PC-9 (cell line): ENCODE measurements at regions of chr19 and their contacts with region 1.

Region 1: DNA sequence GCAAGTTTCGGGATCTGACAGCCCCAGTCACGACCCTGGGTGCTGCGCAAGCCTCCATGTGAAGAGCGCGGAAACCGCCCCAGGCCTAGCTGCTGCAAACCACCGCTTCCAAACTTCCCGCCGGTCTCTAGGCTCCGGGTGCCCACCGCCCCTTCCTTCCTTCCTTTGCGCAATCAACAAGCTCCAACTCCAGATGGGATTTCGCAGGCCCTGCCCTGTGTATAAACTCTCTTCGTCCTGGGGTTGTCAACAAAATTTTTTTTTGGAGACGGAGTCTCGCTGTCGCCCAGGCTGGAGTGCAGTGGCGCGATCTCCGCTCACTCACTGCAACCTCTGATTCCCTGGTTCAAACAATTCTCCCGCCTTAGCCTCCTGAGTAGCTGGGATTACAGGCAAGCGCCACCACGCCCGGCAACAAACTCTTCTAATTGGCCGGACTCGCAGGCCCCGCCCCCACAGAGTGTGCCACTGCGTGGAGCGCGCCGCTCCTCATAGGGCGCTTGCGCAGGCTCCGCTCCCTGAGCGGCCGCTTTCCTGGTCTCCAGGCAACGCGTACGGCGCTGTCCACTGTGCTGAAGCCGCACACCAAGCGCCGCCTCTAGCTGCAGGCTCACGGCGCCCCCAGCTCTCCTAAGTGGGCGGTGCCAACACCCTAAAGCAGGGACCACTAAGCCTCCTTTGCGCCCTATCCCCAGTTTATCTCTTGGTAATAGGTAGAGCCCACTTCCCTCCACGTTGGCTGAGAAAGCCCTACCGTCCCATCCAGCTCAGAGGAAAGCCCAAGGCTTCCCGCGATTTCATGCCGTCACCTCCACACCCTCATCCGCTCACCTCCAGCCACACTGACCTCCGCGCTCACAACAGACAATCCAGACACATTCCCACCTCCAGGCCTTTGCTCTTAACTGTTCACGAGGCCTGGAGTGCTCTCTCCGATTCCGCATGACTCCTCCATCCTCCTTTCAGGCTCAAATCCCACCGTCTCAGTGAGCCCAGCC is 5.5 kb upstream of the QTRT1 start:
- DNase-seq: peak; percentile 81 to 91
- H3K4me3 ChIP-seq: no peak overlapping the region
- H3K27ac ChIP-seq: no peak overlapping the region
- H3K4me1 ChIP-seq: peaks cover 8% of the 10 kb centered on the region; the same call in 1 of the 2 replicates
- H3K27me3 ChIP-seq: 0 out of 2 replicates have a peak, but pooled peaks cover 14% of the 10 kb centered on the region
- CTCF ChIP-seq: no peak

Region 2: DNA sequence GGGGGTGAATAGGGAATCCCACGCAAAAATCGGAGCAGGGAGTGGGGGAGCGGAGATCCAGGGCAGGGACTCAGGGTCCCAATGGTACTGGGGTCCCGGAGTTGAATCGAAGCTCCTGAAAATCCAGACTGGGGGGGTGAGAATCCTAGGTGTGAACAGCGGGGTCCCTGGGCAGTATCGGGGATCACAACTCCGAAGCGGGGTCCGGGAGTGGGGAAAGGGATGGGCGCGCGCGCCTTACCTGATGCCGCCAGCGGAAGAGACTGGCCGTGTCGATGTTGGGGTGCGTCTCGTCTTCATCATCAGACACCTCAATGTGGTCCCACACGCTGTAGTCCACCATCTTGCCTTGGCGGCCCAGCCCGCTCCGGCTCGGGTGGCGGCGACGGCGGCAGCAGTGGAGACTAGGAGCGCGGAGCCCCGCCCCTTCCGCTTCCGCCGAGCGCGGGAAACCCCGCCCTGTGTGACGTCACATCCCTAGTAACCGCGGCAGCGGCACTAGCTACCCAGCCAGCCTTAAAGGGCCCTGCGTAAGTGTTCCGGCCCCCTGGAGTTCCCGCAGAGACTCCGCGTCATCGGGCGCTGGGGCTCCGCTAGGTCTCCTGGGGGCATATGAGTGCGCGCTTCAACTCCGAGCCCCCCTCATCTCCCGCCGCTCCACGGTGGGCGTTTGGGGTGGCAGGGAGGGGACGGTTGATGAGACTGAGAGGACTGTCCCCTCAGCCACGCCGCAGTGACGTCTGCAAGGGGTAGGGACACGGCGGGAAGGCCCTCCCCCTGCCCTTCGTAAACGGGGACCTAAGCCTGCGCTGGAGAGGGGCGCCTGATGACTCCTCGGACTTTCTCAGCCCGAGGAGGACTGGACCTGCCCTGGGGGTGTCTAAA is 292.3 kb before region 1 on chr19 and contains the start of gene CDC37:
- CTCF ChIA-PET with region 1: interaction called, 3 read pairs
- POLR2A ChIA-PET with region 1: interaction called, 3 read pairs
- intact Hi-C with region 1: loop called (anchors 2 kb)
- DNase-seq: peak; percentile 90 to 96
- H3K4me3 ChIP-seq: peak within 1 kb of the TSS; percentile 89
- H3K27ac ChIP-seq: peak within 1 kb of the TSS; percentile 39
- H3K4me1 ChIP-seq: peaks cover 20% of the 10 kb centered on the region
- H3K27me3 ChIP-seq: peaks cover 21% of the 10 kb centered on the region; the same call in 1 of the 2 replicates
- CTCF ChIP-seq: no peak
- total RNA-seq, gene CDC37: 156 and 191 TPM in 2 replicates

Region 3: DNA sequence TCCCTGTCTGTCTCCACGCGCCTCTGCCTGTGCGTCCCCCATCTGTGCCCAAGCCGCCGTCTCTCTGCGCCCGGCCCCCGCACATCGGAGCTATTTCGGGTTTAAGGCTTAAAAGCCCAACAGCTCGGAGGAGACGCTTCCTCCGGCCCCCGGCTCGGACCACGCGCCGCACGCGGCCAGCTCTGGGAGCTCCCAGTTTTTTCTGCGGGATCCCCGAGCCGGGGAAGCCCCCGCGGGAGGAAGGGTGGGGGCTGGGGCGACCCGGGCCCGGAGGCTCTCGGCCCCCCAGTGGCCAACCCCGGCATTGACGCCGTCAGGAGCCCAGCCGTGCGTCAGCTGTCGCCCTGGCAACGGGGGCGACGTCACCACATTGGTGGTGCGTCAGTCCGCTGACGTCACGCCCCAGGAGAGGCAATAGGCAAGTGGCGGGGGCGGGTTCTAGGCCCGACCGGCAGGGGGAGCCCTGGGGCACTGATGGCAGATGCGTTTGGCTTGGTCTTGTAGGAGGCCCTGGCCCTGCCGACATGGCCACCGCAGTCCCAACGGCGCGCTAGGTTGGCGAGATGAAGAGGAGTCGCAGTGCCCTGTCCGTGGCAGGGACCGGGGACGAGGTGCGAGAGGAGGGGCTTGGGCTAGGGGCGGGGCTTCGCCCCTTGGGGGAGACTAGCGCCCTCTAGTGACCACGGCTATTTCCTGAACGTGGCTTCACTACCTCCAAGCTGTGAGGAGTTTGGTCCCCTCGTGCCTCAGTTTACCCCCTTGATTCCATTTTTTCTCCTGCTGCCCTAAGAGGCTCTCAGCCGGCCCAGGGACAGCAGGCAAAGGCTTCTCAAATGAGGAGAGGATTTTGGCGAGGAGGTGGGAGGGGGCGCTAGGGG is 279.1 kb before region 1 on chr19:
- CTCF ChIA-PET with region 1: interaction called, 4 read pairs
- POLR2A ChIA-PET with region 1: no interaction called
- intact Hi-C with region 1: loop called (anchors 5 kb)
- DNase-seq: peak; percentile 80 to 93
- H3K4me3 ChIP-seq: peak overlapping the region; percentile 66
- H3K27ac ChIP-seq: no peak overlapping the region
- H3K4me1 ChIP-seq: peaks cover 13% of the 10 kb centered on the region; the same call in 1 of the 2 replicates
- H3K27me3 ChIP-seq: peaks cover 45% of the 10 kb centered on the region
- CTCF ChIP-seq: peak; percentile 97

Region 4: DNA sequence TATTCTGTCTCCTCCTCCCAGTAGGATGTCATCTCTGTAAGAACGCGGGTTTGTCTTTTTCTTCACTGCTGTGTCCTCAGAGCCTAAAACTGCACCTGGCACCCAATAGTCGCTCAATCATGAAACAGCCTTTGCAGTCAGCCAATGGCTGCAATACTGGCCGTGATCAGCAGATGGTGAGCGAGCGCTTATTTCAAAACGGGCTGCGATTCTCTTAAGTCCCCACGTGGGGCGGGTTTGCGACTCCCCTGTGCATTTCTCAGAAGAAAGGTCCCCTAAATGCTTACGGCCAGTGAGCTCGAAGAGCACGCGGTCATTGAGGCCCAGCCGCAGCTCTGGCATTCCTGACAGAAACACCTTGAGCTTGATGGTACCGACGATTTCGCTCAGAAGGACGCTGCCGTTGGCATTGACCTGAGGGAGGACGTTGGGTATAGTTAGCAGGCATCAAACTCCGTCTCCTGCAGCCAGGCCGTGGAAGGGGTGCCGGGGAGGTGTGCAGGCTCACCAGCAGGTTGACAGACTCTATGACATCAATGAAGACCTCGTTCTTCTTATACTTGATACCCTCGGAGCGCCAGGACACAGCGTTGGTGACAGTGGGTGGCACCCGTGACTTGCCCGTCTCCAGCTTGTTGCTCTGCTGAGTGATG is 114.6 kb before region 1 on chr19:
- CTCF ChIA-PET with region 1: interaction called, 7 read pairs
- POLR2A ChIA-PET with region 1: interaction called, 7 read pairs
- intact Hi-C with region 1: loop called (anchors 1 kb)
- DNase-seq: peak; percentile 82 to 89
- H3K4me3 ChIP-seq: no peak overlapping the region
- H3K27ac ChIP-seq: no peak overlapping the region
- H3K4me1 ChIP-seq: peaks cover 8% of the 10 kb centered on the region; the same call in 1 of the 2 replicates
- H3K27me3 ChIP-seq: no peaks in the 10 kb centered on the region
- CTCF ChIP-seq: peak; percentile 99